GM12878 (cell line): ENCODE measurements at regions of chr1 and their contacts with region 1.

Region 1: GRCh38 chr1:200669314-200670241 is at the start of gene DDX59:
- DNase-seq: peak; percentile 80
- ATAC-seq: peak; percentile 90
- H3K4me3 ChIP-seq: peak within 1 kb of the TSS; percentile 85
- H3K27ac ChIP-seq: peak within 1 kb of the TSS; percentile 98
- H3K4me1 ChIP-seq: no peaks in the 10 kb centered on the region; the same call in 1 of the 2 replicates
- H3K27me3 ChIP-seq: no peaks in the 10 kb centered on the region
- CTCF ChIP-seq: no peak
- EP300 ChIP-seq: no peak
- POLR2A ChIP-seq: peak; percentile 91
- RAD21 ChIP-seq: no peak
- polyA plus RNA-seq, gene DDX59: 17.3 to 17.5 TPM

Region 2: DNA sequence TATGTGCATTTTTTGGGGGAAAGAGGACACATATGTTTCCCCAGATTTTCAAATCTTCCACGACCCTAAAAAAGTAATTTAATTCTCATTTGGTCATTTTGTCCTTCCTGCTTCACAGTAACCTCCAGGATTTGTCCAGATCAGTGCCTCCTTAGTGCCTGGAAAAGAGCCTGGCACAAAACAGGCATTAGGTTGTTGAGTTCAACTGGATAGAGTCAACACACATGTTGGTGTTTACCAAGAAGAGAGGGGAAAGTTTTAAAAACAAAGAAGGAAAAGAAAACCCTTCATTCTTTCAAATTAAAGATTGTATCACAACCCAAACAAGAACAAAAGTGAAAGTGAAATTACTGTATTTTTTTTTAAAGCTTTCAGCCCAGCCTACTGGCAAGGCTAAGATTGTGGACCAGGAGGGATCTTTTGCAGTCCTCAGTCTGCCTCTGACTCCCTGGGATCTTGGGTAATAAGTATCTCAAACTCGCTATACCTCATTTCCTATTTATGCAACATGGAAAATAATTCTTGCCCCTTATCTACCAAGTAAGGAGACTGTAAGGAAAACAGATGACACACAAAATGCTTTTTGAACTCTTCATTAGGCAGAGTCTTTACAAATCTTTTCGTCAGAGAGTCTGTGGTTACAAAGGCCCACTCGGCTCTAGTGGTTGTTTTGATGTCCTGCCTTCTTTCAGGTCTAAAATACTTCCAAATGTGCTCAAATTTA is 317.6 kb before region 1 on chr1:
- CTCF ChIA-PET with region 1: no interaction called
- POLR2A ChIA-PET with region 1: no interaction called
- RAD21 ChIA-PET with region 1: no interaction called
- SMC1A ChIA-PET with region 1: no interaction called
- in situ Hi-C with region 1: no loop called
- intact Hi-C with region 1: loop called (anchors 5 kb)
- DNase-seq: no peak
- ATAC-seq: peak; percentile 75
- H3K4me3 ChIP-seq: no peak overlapping the region; the same call in 1 of the 2 replicates
- H3K27ac ChIP-seq: peak overlapping the region; percentile 35; the same call in 1 of the 2 replicates
- H3K4me1 ChIP-seq: peaks cover 30% of the 10 kb centered on the region
- H3K27me3 ChIP-seq: no peaks in the 10 kb centered on the region
- CTCF ChIP-seq: no peak; a peak in 1 of 6 replicates
- EP300 ChIP-seq: no peak
- POLR2A ChIP-seq: no peak
- RAD21 ChIP-seq: no peak

Region 3: GRCh38 chr1:200639790-200640669 is 29.5 kb before region 1 on chr1:
- CTCF ChIA-PET with region 1: interaction called, 4 read pairs
- POLR2A ChIA-PET with region 1: interaction called, 14 read pairs
- RAD21 ChIA-PET with region 1: interaction called, 7 read pairs
- SMC1A ChIA-PET with region 1: interaction called, 25 read pairs
- in situ Hi-C with region 1: no loop called
- intact Hi-C with region 1: no loop called
- DNase-seq: no peak
- ATAC-seq: peak; percentile 99
- H3K4me3 ChIP-seq: no peak overlapping the region
- H3K27ac ChIP-seq: peak overlapping the region; percentile 78
- H3K4me1 ChIP-seq: peaks cover 9% of the 10 kb centered on the region; the same call in 1 of the 2 replicates
- H3K27me3 ChIP-seq: no peaks in the 10 kb centered on the region
- CTCF ChIP-seq: no peak
- EP300 ChIP-seq: no peak; a peak in 1 of 4 replicates
- POLR2A ChIP-seq: no peak
- RAD21 ChIP-seq: no peak

Region 4: DNA sequence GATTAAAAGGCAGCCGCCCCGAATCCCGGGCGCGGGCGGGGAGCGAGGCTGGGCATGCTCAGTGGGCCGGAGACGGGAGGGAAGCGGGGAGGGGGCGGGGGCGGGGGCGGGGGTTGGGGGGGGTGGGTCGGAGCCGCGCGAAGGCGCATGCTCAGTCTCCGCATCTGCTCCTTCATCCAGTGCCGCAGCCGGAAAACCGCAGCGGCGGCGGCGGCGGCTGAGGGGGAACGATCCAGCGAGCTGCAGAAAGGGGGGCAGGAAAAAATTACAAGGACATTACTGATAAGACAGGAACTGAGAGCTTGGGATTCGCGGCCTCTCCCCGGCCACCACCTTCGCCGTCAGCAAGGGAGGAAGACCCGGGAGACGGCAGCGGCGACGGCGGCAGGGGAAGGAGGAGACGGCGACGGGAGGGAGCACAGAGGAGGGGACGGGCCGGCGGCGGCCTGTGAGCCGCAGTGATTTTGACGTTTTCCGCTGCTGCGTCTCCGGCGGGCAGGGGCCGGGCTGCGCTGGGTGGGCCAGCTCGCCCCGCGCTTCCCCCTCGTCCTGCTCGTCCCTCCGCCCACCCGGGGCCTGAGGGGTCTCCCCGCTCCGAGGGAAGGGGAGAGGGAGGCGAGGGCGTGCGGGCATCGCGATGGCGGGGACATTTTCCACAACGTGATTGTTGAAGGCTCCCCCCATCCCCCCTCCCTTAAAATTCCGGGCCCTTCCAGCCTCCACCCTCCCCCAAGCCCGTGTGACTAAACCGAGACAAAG is 69.3 kb after region 1 on chr1 and contains the start of gene CAMSAP2:
- CTCF ChIA-PET with region 1: interaction called, 3 read pairs
- POLR2A ChIA-PET with region 1: interaction called, 21 read pairs
- RAD21 ChIA-PET with region 1: interaction called, 14 read pairs
- SMC1A ChIA-PET with region 1: interaction called, 12 read pairs
- in situ Hi-C with region 1: no loop called
- intact Hi-C with region 1: loop called (anchors 5 kb)
- DNase-seq: no peak
- ATAC-seq: peak; percentile 75
- H3K4me3 ChIP-seq: peak within 1 kb of the TSS; percentile 99
- H3K27ac ChIP-seq: peak within 1 kb of the TSS; percentile 88
- H3K4me1 ChIP-seq: peaks cover 5% of the 10 kb centered on the region; the same call in 1 of the 2 replicates
- H3K27me3 ChIP-seq: no peaks in the 10 kb centered on the region
- CTCF ChIP-seq: no peak
- EP300 ChIP-seq: no peak
- POLR2A ChIP-seq: peak; percentile 71
- RAD21 ChIP-seq: no peak
- polyA plus RNA-seq, gene CAMSAP2: 5.0 to 6.4 TPM

Region 5: DNA sequence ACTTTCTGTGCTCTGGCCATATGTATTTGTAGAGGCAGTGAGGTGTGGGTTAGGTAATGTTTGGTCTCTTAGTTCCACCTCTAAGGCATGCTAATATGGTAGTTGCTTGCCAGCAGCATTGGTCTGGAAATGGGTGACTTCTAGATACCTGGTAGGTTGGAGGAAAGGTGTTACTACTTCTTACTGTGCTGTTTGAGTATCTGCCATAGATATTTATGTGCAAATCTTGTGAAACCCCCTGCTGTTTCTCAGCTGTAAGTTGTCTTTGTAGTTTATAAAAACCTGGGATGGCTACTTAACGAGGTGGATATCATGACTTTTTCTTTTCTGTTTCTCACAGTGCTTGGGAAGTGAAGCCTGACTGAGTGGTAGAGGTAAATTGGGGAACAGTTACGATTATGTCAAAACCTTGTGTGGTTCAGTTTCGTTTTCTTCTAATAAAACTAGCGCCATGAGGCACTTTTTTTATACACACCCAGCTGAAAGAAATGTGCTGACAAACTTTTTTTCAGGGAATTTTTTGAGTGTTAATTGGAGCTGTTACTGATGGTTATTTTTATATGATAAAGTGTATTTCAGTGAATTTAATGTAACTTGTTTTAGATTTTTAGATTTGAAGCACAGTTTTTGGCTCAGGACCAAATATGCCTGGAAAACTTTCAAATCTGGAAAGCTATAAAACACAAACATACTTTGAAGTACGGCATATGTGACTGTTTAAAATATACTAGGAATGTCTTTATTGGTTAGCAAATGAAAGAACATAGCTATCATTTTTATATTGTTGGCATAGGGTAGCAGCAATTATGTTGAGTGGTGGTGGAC is 111.2 kb after region 1 on chr1:
- CTCF ChIA-PET with region 1: interaction called, 3 read pairs
- POLR2A ChIA-PET with region 1: interaction called, 4 read pairs
- RAD21 ChIA-PET with region 1: interaction called, 7 read pairs
- SMC1A ChIA-PET with region 1: interaction called, 14 read pairs
- in situ Hi-C with region 1: no loop called
- intact Hi-C with region 1: no loop called
- DNase-seq: peak; percentile 61
- ATAC-seq: peak; percentile 89
- H3K4me3 ChIP-seq: peak overlapping the region; percentile 4; the same call in 1 of the 2 replicates
- H3K27ac ChIP-seq: peak overlapping the region; percentile 71
- H3K4me1 ChIP-seq: peaks cover 10% of the 10 kb centered on the region
- H3K27me3 ChIP-seq: no peaks in the 10 kb centered on the region
- CTCF ChIP-seq: no peak
- EP300 ChIP-seq: no peak
- POLR2A ChIP-seq: no peak
- RAD21 ChIP-seq: no peak